Activated CD8-positive, alpha-beta T cell treated with anti-CD3 and anti-CD28 coated beads for 36 hours (primary cell): ENCODE measurements at regions of chr18 and their contacts with region 1.

Region 1: GRCh38 chr18:77132371-77133050 is at the start of gene MBP:
- DNase-seq: peak; percentile 79
- ATAC-seq: peak; percentile 63
- H3K4me3 Mint-ChIP-seq: peak within 1 kb of the TSS; percentile 99
- H3K27ac Mint-ChIP-seq: peak within 1 kb of the TSS; percentile 98
- H3K4me1 Mint-ChIP-seq: peaks cover 43% of the 10 kb centered on the region
- H3K27me3 Mint-ChIP-seq: no peaks in the 10 kb centered on the region
- CTCF ChIP-seq: no peak
- total RNA-seq, gene MBP: 39.9 to 41.5 TPM

Region 2: DNA sequence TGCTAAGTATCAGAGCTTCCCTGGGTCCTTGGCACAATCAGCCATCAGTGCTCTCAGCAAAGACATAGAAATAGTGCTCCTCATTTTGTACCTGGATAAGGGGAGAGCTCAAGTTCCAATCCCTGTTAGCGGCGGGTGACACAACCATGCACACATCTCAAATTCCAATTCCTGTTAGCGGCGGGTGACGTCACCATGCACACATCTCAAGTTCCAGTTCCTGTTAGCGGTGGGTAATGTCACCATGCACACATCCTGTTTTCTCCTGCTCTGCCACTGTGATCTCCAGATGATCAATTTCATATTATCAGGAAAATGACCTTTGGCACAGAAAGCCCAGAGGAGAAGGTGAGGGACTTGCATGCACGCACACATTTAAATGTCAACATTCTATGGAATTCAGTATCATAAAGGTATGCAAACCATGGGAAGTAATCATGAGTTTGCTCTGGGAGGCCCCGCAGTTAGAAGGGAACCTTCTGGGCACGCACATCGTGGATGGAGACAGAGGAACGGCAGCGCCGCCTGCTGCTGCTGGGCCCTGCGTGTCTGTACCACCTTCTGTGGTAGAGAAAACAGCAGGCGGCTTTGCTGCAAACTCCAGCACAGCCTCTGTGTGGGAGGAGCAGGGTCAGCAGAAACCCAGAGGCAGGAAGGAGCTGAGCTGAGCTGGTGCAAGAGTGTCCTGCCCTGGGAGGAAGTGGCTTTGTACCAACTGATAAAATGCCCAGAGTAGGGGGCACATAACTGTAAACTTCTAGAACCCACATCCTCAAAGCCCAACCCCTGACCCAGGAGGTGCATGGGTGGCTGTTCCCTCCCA is 77.7 kb before region 1 on chr18:
- CTCF ChIA-PET with region 1: interaction called, 3 read pairs
- POLR2A ChIA-PET with region 1: interaction called, 20 read pairs
- intact Hi-C with region 1: loop called (anchors 2 kb)
- DNase-seq: peak; percentile 92
- ATAC-seq: peak; percentile 85
- H3K4me3 Mint-ChIP-seq: peak overlapping the region; percentile 79
- H3K27ac Mint-ChIP-seq: peak overlapping the region; percentile 93
- H3K4me1 Mint-ChIP-seq: peaks cover 57% of the 10 kb centered on the region
- H3K27me3 Mint-ChIP-seq: no peaks in the 10 kb centered on the region
- CTCF ChIP-seq: peak; percentile 42

Region 3: GRCh38 chr18:77061946-77062517 is 70.5 kb before region 1 on chr18:
- CTCF ChIA-PET with region 1: interaction called, 3 read pairs
- POLR2A ChIA-PET with region 1: interaction called, 25 read pairs
- intact Hi-C with region 1: loop called (anchors 5 kb)
- DNase-seq: peak; percentile 28
- ATAC-seq: peak; percentile 40
- H3K4me3 Mint-ChIP-seq: peak overlapping the region; percentile 40
- H3K27ac Mint-ChIP-seq: peak overlapping the region; percentile 98
- H3K4me1 Mint-ChIP-seq: peaks cover 82% of the 10 kb centered on the region
- H3K27me3 Mint-ChIP-seq: no peaks in the 10 kb centered on the region
- CTCF ChIP-seq: no peak

Region 4: GRCh38 chr18:77067291-77068061 is 65.0 kb before region 1 on chr18:
- CTCF ChIA-PET with region 1: interaction called, 3 read pairs
- POLR2A ChIA-PET with region 1: interaction called, 25 read pairs
- intact Hi-C with region 1: loop called (anchors 5 kb)
- DNase-seq: peak; percentile 86
- ATAC-seq: peak; percentile 55
- H3K4me3 Mint-ChIP-seq: peak overlapping the region; percentile 43
- H3K27ac Mint-ChIP-seq: peak overlapping the region; percentile 92
- H3K4me1 Mint-ChIP-seq: peaks cover 98% of the 10 kb centered on the region
- H3K27me3 Mint-ChIP-seq: no peaks in the 10 kb centered on the region
- CTCF ChIP-seq: no peak

Region 5: GRCh38 chr18:77177009-77177408 is 44.5 kb after region 1 on chr18:
- CTCF ChIA-PET with region 1: no interaction called
- POLR2A ChIA-PET with region 1: no interaction called
- intact Hi-C with region 1: no loop called
- DNase-seq: no peak
- ATAC-seq: no peak
- H3K4me3 Mint-ChIP-seq: no peak overlapping the region
- H3K27ac Mint-ChIP-seq: no peak overlapping the region
- H3K4me1 Mint-ChIP-seq: no peaks in the 10 kb centered on the region
- H3K27me3 Mint-ChIP-seq: no peaks in the 10 kb centered on the region
- CTCF ChIP-seq: no peak

Region 6: DNA sequence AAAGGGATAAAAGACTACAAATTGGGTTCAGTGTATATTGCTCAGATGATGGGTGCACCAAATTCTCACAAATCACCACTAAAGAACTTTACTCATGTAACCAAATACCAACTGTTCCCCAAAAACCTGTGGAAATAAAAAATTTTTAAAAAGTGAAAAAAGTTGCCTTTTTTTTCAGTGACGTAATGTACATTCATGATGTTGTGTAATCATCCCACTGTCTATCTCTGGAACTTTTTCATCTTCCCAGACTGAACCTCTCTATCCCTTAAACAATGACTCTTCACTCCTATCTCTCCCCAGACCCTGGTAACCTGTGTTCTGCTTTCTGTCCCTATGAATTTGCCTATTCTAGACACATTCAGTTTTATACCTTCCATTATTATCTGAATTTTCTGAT is 98.1 kb after region 1 on chr18:
- CTCF ChIA-PET with region 1: no interaction called
- POLR2A ChIA-PET with region 1: no interaction called
- intact Hi-C with region 1: no loop called
- DNase-seq: no peak
- ATAC-seq: no peak
- H3K4me3 Mint-ChIP-seq: no peak overlapping the region
- H3K27ac Mint-ChIP-seq: no peak overlapping the region
- H3K4me1 Mint-ChIP-seq: no peaks in the 10 kb centered on the region
- H3K27me3 Mint-ChIP-seq: peaks cover 13% of the 10 kb centered on the region
- CTCF ChIP-seq: no peak